Astrocyte of the cerebellum (primary cell): ENCODE measurements at regions of chr14 and their contacts with region 1.

Region 1: GRCh38 chr14:95620659-95621059 is 65.6 kb upstream of the TCL1B start:
- DNase-seq: no peak
- H3K4me3 ChIP-seq: no peak overlapping the region
- CTCF ChIP-seq: no peak

Region 2: GRCh38 chr14:95679998-95680735 is 59.5 kb after region 1 on chr14:
- in situ Hi-C with region 1: loop called (anchors 10 kb)
- DNase-seq: no peak
- H3K4me3 ChIP-seq: no peak overlapping the region
- CTCF ChIP-seq: no peak

Region 3: GRCh38 chr14:95690815-95691390 is 70.2 kb after region 1 on chr14:
- in situ Hi-C with region 1: no loop called
- DNase-seq: no peak
- H3K4me3 ChIP-seq: no peak overlapping the region
- CTCF ChIP-seq: no peak